ENCODE measurements at regions of chr6 and their contacts with region 1.

Region 1: DNA sequence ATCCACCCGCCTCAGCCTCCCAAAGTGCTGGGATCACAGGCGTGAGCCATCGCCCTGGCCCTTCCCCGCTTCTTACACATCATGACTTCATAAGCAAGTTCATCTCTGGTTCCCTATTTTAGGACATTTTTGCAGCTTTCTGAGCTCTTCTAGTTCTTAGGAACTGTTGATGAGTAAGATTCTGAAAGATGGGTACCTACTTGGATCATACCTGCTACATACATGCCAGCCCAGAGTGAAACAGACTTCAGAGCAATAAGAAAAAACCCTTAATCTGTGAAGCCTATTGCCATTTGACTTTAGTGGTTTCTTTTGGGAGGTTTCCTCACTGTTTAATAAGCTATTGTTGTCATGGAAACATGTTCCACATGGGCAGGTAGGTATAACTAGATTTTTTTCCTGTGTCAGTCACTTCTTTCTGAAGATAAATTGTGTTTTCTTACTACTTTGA is 27.9 kb upstream of the TMEM217 start:
- DNase-seq: no peak
- H3K4me3 Mint-ChIP-seq: no peak overlapping the region
- H3K27ac Mint-ChIP-seq: peak overlapping the region; percentile 68
- H3K4me1 Mint-ChIP-seq: peaks cover 48% of the 10 kb centered on the region
- H3K27me3 Mint-ChIP-seq: no peaks in the 10 kb centered on the region

Region 2: DNA sequence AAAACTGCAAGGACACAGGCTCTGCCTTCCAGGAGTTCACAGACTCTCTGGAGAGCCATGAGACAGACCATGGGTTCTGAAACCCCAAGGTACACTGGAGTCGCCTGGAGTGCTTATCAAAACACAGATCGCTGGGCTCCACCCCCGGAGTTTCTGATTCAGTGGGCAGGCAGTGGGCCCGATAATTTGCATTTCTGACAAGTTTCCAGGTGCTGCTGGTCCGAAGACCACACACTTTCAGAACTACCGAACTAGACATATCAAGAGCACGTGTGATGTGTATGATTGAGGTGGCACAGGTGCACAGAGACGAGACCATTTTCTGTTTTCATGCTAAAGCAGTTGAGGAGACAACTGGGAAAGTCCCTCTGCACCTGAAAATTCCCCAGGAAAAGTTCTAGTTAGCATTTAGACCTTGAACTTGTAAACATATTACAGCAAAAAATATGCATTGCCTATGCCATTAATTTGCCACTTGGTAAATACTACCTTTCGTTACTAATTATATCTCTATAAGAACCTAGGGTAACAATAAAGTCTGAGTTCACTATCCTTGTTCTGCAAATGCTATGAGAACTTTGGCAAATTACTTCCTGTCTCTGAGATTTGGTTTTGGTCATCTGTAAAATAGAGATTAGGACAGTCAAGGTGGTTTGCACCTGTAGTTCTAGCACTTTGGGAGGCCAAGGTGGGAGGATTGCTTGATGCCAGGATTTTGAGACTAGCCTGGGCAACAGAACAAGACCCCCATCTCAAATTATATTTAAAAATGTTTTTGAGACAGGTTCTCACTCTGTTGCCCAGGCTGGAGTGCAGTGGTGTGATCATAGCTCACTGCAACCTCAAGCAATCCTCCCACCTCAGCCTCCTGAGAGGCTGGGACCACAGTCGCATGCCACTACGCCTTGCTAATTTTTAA is 130.2 kb before region 1 on chr6:
- intact Hi-C with region 1: no loop called
- DNase-seq: peak; percentile 84
- H3K4me3 Mint-ChIP-seq: peak overlapping the region; percentile 66
- H3K27ac Mint-ChIP-seq: peak overlapping the region; percentile 81
- H3K4me1 Mint-ChIP-seq: peaks cover 22% of the 10 kb centered on the region
- H3K27me3 Mint-ChIP-seq: peaks cover 1% of the 10 kb centered on the region

Region 3: DNA sequence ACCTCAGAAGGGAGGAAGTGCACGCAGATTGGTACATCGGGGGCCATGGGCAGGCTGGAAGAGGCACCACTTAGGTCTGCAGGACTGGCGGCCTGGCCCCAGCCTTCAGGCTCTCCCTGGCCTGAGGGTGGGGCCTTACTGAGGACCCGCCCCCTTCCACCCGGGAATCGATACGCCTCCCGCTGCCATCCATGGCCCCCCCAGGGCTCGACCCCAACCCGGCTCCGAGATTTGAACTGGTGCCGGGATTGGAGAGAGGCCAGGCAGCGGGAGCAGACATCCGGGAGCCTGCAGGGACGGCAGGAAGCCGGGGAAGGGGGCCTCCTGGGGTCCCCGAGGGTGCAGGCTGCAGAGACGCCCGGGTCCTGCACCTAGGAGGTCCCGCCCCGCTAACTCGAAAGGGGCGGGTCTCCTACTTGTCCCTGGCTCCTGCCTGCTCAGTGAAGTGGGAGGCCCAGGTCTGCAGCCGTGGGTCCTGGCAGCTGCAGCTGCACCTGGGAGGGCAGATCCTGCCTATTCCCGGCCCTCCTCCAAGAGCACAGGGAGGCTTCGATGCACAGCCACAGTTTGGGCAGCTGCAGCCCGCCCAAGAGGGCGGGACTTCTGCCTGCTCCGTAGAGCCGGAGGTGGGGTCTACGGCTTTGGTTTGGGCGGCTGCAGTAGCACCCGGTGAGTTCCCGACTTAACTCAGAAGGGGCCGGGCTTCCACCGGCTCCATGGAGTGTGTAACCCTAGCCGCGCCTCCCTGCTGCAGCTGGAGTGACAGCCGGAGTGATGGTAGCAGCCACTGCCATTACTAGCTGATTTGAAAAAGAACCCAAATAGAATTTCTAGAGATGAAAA is 63.5 kb before region 1 on chr6:
- intact Hi-C with region 1: loop called (anchors 5 kb)
- DNase-seq: peak; percentile 94
- H3K4me3 Mint-ChIP-seq: peak overlapping the region; percentile 84
- H3K27ac Mint-ChIP-seq: peak overlapping the region; percentile 69
- H3K4me1 Mint-ChIP-seq: peaks cover 34% of the 10 kb centered on the region
- H3K27me3 Mint-ChIP-seq: no peaks in the 10 kb centered on the region

Region 4: GRCh38 chr6:37630281-37630799 is 344.5 kb after region 1 on chr6:
- intact Hi-C with region 1: no loop called
- DNase-seq: no peak
- H3K4me3 Mint-ChIP-seq: no peak overlapping the region
- H3K27ac Mint-ChIP-seq: no peak overlapping the region
- H3K4me1 Mint-ChIP-seq: peaks cover 8% of the 10 kb centered on the region
- H3K27me3 Mint-ChIP-seq: peaks cover 14% of the 10 kb centered on the region

Measured in activated CD4-positive, alpha-beta T cell treated with anti-CD3 and anti-CD28 coated beads, Interleukin-2, amount 10 ng/mL, durations not matched to agents 24 days and 14 days (primary cell).